B cell (primary cell): ENCODE measurements at regions of chr9 and their contacts with region 1.

Region 1: DNA sequence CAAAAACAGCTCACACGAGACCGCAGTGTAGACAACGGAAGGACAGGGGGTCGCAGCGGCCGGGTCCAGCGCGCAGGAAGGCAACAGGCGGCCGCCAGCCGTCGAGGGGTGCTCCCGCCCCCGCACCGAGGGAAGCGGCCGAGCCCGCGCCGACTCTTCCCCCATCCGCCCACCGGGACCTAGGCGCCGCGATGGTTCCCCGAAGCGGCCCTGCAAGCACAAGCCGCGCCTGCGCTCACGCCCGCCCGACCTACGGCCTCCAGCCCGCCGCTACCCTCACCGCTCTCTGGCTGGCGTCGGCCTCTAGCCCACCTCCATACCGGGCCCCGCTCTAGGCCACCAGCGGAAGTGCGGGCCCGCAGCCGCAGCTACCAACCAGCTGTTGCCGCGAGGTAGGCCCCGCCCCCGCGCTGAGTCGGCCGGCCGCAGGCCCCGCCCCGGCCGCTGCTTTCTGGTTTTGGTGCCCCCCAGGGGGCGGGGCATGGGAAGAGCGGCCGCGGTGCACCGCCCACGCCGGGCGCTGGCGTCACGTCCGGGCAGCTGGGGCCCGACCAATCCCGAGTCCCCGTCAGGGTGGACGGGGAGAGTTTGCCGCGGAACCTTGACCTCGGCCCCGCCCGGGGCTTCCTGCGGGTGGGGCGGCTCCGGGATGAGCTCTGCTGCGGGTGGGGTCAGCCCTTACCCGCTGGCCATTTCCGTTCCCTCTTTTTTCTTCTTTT is at the start of gene SETX:
- DNase-seq: peak; percentile 97
- ATAC-seq: peak; percentile 92
- H3K4me3 ChIP-seq: peak within 1 kb of the TSS; percentile 61 to 93 (median 88)
- H3K4me3 Mint-ChIP-seq: peak within 1 kb of the TSS; percentile 95
- H3K27ac ChIP-seq: peak within 1 kb of the TSS; percentile 88 to 97
- H3K27ac Mint-ChIP-seq: peak within 1 kb of the TSS; percentile 97
- H3K4me1 ChIP-seq: peaks cover 44 to 50% of the 10 kb centered on the region in 2 donors
- H3K4me1 Mint-ChIP-seq: peaks cover 52% of the 10 kb centered on the region
- H3K27me3 ChIP-seq: no peaks in the 10 kb centered on the region
- H3K27me3 Mint-ChIP-seq: no peaks in the 10 kb centered on the region
- CTCF ChIP-seq: no peak
- total RNA-seq, gene SETX: 105 and 114 TPM in 2 replicates

Region 2: DNA sequence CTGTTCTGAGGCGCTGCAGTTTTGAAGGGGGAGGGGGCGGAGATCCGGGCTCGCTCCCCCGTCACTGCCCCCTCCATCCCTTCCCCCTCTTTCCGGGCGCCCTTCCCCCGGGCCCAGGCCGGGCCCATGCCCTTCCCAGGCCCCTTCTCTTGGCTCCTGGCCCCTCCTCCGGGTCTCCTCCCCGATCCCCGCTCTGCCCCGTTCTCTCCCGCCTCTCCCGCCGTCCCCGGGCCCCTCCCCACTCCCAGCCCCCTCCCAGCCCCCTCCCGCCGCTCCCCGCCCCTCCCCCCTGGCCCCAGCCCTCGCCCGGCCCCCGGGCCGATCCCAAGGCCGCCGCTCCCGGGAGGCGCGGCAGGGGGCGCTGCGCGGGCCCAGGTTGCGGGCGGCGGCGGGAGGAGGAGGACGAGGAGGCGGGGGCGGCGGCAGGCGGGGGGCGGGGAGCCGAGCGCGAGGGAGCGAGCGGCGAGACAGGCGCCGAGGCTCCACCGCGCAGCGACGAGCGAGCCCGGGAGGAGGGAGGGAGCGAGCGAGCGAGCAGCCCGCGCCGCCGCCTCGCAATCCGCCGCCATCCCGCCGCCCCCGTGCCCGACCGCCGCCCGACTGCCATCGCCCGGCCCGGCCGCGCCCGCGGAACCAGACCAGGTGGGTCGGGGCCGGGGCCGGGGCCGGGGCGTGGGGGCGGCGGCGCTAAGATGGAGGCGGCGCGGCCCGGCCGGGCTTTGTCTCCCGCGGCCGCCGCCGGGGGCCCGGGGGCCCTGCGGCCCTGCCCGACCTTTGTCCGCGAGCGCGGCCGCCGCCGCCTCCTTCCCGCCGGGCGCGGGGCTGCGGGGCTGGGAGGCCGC is 961.0 kb before region 1 on chr9 and contains the start of gene PRRC2B:
- CTCF ChIA-PET with region 1: no interaction called
- POLR2A ChIA-PET with region 1: no interaction called
- intact Hi-C with region 1: loop called (anchors 5 kb)
- DNase-seq: peak; percentile 91
- ATAC-seq: peak; percentile 64
- H3K4me3 ChIP-seq: peak within 1 kb of the TSS; percentile 53 to 80 (median 72)
- H3K4me3 Mint-ChIP-seq: peak within 1 kb of the TSS; percentile 88
- H3K27ac ChIP-seq: peak within 1 kb of the TSS; percentile 74 to 82
- H3K27ac Mint-ChIP-seq: peak within 1 kb of the TSS; percentile 90
- H3K4me1 ChIP-seq: peaks cover 42 to 47% of the 10 kb centered on the region in 2 donors
- H3K4me1 Mint-ChIP-seq: peaks cover 46% of the 10 kb centered on the region
- H3K27me3 ChIP-seq: no peaks in the 10 kb centered on the region
- H3K27me3 Mint-ChIP-seq: no peaks in the 10 kb centered on the region
- CTCF ChIP-seq: peak; percentile 48
- total RNA-seq, gene PRRC2B: 256 and 268 TPM in 2 replicates

Region 3: DNA sequence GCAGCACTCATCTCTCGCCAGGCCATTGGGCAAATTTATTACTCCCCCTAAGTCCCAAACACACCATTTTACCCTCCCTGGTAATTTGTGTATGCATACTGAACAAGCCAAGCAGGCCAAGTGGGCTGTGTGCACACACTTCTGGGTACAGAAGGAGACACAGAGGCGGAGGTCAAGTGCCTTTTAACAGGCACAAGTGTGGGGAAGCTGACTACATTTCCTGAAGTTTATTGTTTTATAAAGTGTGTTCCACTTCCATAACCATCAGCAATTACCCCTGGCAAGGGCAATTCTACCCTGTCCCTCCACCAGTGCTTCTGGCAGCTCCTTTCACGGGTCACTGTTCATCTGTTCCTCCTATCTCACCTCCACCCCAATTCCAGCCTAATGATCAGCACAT is 94.0 kb before region 1 on chr9:
- CTCF ChIA-PET with region 1: interaction called, 3 read pairs
- POLR2A ChIA-PET with region 1: no interaction called
- intact Hi-C with region 1: loop called (anchors 1 kb)
- DNase-seq: no peak
- ATAC-seq: no peak
- H3K4me3 ChIP-seq: no peak overlapping the region
- H3K4me3 Mint-ChIP-seq: no peak overlapping the region
- H3K27ac ChIP-seq: no peak overlapping the region
- H3K27ac Mint-ChIP-seq: no peak overlapping the region
- H3K4me1 ChIP-seq: peaks cover 4 to 10% of the 10 kb centered on the region in 2 donors
- H3K4me1 Mint-ChIP-seq: peaks cover 9% of the 10 kb centered on the region
- H3K27me3 ChIP-seq: no peaks in the 10 kb centered on the region
- H3K27me3 Mint-ChIP-seq: no peaks in the 10 kb centered on the region
- CTCF ChIP-seq: no peak

Region 4: GRCh38 chr9:132372177-132373095 is 17.6 kb after region 1 on chr9:
- CTCF ChIA-PET with region 1: interaction called, 7 read pairs
- POLR2A ChIA-PET with region 1: interaction called, 10 read pairs
- intact Hi-C with region 1: no loop called
- DNase-seq: peak; percentile 36
- ATAC-seq: peak; percentile 48
- H3K4me3 ChIP-seq: no peak overlapping the region
- H3K4me3 Mint-ChIP-seq: peak overlapping the region; percentile 74
- H3K27ac ChIP-seq: peak overlapping the region; percentile 25 to 38
- H3K27ac Mint-ChIP-seq: peak overlapping the region; percentile 91
- H3K4me1 ChIP-seq: peaks cover 30 to 34% of the 10 kb centered on the region in 2 donors
- H3K4me1 Mint-ChIP-seq: peaks cover 38% of the 10 kb centered on the region
- H3K27me3 ChIP-seq: no peaks in the 10 kb centered on the region
- H3K27me3 Mint-ChIP-seq: no peaks in the 10 kb centered on the region
- CTCF ChIP-seq: no peak

Region 5: GRCh38 chr9:132381966-132382541 is 27.3 kb after region 1 on chr9:
- CTCF ChIA-PET with region 1: interaction called, 160 read pairs
- POLR2A ChIA-PET with region 1: interaction called, 156 read pairs
- intact Hi-C with region 1: loop called (anchors 1 kb)
- DNase-seq: peak; percentile 84
- ATAC-seq: peak; percentile 67
- H3K4me3 ChIP-seq: peak overlapping the region in 4 of 5 experiments; percentile 22 to 48 (median 34)
- H3K4me3 Mint-ChIP-seq: peak overlapping the region; percentile 88
- H3K27ac ChIP-seq: peak overlapping the region; percentile 81 to 96
- H3K27ac Mint-ChIP-seq: peak overlapping the region; percentile 99
- H3K4me1 ChIP-seq: peaks cover 62 to 69% of the 10 kb centered on the region in 2 donors
- H3K4me1 Mint-ChIP-seq: peaks cover 71% of the 10 kb centered on the region
- H3K27me3 ChIP-seq: no peaks in the 10 kb centered on the region
- H3K27me3 Mint-ChIP-seq: no peaks in the 10 kb centered on the region
- CTCF ChIP-seq: no peak

Region 6: GRCh38 chr9:132509928-132510874 is 155.4 kb after region 1 on chr9:
- CTCF ChIA-PET with region 1: no interaction called
- POLR2A ChIA-PET with region 1: no interaction called
- intact Hi-C with region 1: no loop called
- DNase-seq: no peak
- ATAC-seq: no peak
- H3K4me3 ChIP-seq: no peak overlapping the region
- H3K4me3 Mint-ChIP-seq: no peak overlapping the region
- H3K27ac ChIP-seq: no peak overlapping the region
- H3K27ac Mint-ChIP-seq: no peak overlapping the region
- H3K4me1 ChIP-seq: peaks cover 5 to 12% of the 10 kb centered on the region in 2 donors
- H3K4me1 Mint-ChIP-seq: peaks cover 4% of the 10 kb centered on the region
- H3K27me3 ChIP-seq: peaks cover 0 to 5% (median 0%) of the 10 kb centered on the region in 4 experiments
- H3K27me3 Mint-ChIP-seq: peaks cover 12% of the 10 kb centered on the region
- CTCF ChIP-seq: no peak